ENCODE measurements at regions of chr9 and their contacts with region 1.

Region 1: DNA sequence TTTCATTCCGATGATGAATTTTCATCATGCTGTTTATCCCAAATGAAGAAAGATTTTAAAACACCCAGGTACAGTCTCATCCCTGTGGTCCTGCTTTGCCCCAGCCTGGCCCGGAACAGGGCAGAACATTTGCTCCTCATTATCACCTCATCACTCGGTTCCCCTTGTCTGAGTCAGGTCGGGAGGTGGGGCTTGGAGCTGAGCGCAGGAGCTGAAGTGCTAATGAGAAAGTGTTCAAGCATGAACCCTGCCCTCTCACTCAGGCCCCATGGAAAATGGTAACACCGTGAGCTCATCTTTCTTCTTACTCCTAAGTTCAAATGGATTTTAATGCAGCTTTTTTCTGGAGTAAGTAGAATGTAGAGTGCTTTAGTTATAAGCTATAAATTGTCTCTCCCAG is 466.2 kb downstream of the KDM4C start:
- DNase-seq: no peak
- CTCF ChIP-seq: no peak

Region 2: DNA sequence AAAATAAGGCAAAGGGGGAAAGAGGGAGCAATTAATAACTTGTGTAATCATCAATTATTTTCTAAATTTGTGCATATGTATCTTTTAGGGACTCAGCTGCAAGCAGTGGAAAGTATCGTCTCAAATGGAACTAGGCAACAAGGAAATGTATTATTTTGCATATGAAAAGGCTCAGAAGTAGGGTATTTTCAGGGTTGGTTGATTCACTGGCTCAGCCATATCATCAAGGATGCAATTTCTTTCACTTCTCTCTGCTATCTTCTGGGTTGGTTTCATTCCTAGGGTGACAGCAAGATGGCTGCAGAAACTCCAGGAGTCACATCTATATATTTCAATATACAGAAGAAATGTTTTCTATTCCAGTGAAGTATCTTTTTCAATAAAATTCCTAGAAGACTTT is 65.8 kb after region 1 on chr9:
- in situ Hi-C with region 1: loop called (anchors 10 kb)
- DNase-seq: peak; percentile 24
- CTCF ChIP-seq: no peak

Region 3: GRCh38 chr9:7415836-7416235 is 191.9 kb after region 1 on chr9:
- in situ Hi-C with region 1: no loop called
- DNase-seq: no peak
- CTCF ChIP-seq: no peak